A549 (cell line): ENCODE measurements at regions of chr17 and their contacts with region 1.

Region 1: DNA sequence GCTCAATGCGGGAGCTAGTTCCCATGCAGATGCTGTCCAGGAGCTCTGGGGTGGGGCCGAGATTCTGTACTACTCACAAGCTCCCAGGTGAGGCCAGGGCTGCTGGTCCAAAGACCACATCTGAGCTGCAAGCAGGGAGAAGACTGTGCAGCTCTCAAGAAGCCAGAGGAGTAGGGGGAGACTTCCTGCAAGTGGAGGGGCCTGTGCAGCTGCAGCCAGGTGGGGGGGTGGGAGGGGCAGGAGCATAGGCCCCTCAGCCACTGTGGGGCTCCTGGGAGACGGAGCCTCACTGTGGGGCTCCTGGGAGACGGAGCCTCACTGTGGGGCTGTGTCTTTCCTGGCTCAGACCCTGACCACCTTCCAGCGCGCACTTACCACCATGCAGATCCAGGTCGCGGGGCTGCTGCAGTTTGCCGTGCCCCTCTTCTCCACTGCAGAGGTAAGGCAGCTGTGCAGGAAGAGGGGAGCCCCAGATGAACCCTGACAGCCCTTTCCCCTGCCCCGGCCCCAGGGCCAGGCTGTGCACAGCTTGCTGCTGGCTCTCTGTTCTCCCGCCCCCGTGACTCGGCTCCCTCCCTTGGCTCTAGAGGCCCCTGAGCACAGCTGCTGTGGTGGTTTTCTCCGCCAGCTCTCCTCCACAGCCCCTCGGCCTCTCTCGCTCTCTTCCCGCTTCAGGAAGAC is 24.3 kb upstream of the DNAI2 start:
- DNase-seq: no peak
- ATAC-seq: no peak
- H3K4me3 ChIP-seq: no peak overlapping the region
- H3K27ac ChIP-seq: no peak overlapping the region
- H3K4me1 ChIP-seq: no peaks in the 10 kb centered on the region
- CTCF ChIP-seq: no peak
- EP300 ChIP-seq: no peak
- POLR2A ChIP-seq: no peak
- RAD21 ChIP-seq: no peak

Region 2: GRCh38 chr17:74259667-74260524 is 10.2 kb after region 1 on chr17:
- CTCF ChIA-PET with region 1: interaction called, 16 read pairs
- POLR2A ChIA-PET with region 1: no interaction called
- DNase-seq: no peak
- ATAC-seq: peak; percentile 54 to 59; a peak in 4 of 6 replicates
- H3K4me3 ChIP-seq: no peak overlapping the region
- H3K27ac ChIP-seq: no peak overlapping the region
- H3K4me1 ChIP-seq: no peaks in the 10 kb centered on the region
- CTCF ChIP-seq: no peak
- EP300 ChIP-seq: no peak
- POLR2A ChIP-seq: no peak
- RAD21 ChIP-seq: no peak